ENCODE measurements at regions of chr1 and their contacts with region 1.

Region 1: DNA sequence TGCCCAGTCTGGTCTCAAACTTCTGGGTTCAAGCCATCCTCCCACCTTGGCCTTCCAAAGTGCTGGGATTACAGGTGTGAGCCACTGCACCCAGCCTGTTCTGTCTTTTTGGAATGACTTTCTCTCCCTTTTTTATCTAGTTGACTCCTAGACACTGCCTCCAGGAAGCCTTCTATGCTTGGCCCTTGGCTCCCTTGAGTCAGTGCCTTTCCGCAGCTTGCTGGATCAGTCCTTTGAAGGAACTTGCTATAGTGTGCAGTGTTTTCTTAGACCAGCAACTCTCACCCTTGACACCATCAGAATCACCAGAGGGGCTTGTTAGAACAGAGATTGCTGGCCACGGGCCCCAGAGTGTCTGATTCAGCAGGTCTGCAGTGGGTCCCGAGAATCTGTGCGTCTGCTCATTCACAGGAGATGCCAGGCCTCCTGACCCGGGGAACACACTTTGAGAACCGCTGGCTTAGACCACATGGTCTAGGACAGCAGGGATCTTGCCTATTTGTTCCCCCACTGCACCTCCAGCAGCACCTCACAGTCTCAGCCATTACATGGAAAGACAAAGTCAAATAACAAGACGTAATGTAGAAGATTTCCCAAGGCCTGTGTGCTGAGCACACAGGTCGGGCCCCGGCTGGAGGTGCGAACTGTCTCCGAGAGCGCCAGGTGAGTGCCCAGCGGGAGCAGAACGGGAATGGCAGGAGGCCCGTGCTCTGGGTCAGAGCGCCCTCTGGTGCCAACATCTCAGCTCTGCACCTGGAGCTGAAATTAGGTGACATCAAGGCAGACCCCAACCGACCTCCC is 27.4 kb upstream of the CTPS1 start:
- DNase-seq: peak; percentile 44 to 86 (median 85)
- ATAC-seq: peak; percentile 69 to 79
- H3K4me3 ChIP-seq: no peak overlapping the region
- H3K27ac ChIP-seq: no peak overlapping the region
- H3K4me1 ChIP-seq: peaks cover 4% of the 10 kb centered on the region
- H3K27me3 ChIP-seq: no peaks in the 10 kb centered on the region

Region 2: DNA sequence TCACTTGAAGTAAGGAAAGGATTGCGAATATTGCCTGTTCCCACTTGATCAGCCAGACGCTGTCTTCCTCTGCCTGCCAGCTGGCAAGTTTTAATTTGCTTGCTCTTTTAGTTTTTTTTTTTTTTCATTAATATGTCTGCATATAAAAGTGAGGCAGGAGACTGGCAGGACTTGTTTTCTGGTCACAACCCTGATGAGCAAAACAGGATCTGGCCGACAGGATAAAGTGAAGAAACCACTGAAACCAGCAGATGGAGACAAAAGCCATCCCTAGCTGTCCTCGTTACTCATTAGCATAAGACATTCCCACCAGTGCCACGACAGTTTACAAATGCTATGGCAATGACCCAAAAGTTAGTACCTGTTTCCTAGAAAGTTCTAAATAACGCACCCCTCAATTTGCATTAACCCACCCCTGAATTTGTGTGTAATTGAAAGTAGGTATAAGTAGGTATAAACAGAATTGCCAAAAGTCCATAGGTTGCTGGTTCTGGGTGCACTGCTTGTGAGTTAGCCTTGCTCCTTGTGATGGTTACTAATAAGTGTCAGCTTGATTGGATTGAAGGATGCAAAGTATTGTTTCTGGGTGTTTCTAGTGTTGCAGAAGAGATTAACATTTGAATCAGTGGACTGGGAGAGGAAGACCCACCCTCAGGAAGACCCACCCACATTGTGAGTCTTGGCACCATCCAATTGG is 359.9 kb before region 1 on chr1:
- intact Hi-C with region 1: loop called in 1 of 4 experiments (anchors 10 kb)
- DNase-seq: no peak
- ATAC-seq: peak; percentile 50 to 70
- H3K4me3 ChIP-seq: no peak overlapping the region
- H3K27ac ChIP-seq: no peak overlapping the region
- H3K4me1 ChIP-seq: no peaks in the 10 kb centered on the region
- H3K27me3 ChIP-seq: no peaks in the 10 kb centered on the region

Region 3: GRCh38 chr1:40606978-40607377 is 345.2 kb before region 1 on chr1:
- intact Hi-C with region 1: loop called in 1 of 4 experiments (anchors 10 kb)
- DNase-seq: no peak
- ATAC-seq: no peak
- H3K4me3 ChIP-seq: no peak overlapping the region
- H3K27ac ChIP-seq: no peak overlapping the region
- H3K4me1 ChIP-seq: no peaks in the 10 kb centered on the region
- H3K27me3 ChIP-seq: no peaks in the 10 kb centered on the region

Region 4: DNA sequence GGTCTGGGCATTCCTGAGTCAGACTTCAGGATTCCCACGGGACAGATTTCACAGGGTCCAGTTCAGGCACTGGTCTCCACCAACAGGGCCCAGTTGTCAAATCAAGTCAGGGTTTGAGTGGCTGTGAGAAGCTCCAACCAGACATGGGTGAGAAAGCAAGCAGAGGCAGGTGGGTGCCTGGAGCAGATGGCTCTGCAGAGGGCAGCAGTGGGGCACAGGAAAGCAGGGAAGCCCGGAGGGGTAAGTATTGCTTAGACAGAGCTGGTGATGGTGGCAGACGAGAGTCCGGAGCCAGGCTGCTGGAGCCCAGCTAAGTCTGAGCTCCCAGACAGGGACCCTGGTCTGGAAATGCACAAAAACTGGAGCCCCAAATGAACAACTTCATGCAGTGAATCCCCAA is 327.1 kb before region 1 on chr1:
- intact Hi-C with region 1: loop called in 1 of 4 experiments (anchors 10 kb)
- DNase-seq: peak; percentile 31 to 69 (median 61)
- ATAC-seq: peak; percentile 56 to 60
- H3K4me3 ChIP-seq: no peak overlapping the region
- H3K27ac ChIP-seq: no peak overlapping the region
- H3K4me1 ChIP-seq: no peaks in the 10 kb centered on the region
- H3K27me3 ChIP-seq: no peaks in the 10 kb centered on the region

Region 5: GRCh38 chr1:40736085-40736531 is 216.0 kb before region 1 on chr1:
- intact Hi-C with region 1: no loop called
- DNase-seq: no peak
- ATAC-seq: peak; percentile 46 to 53
- H3K4me3 ChIP-seq: no peak overlapping the region
- H3K27ac ChIP-seq: no peak overlapping the region
- H3K4me1 ChIP-seq: peaks cover 3% of the 10 kb centered on the region
- H3K27me3 ChIP-seq: no peaks in the 10 kb centered on the region

Region 6: DNA sequence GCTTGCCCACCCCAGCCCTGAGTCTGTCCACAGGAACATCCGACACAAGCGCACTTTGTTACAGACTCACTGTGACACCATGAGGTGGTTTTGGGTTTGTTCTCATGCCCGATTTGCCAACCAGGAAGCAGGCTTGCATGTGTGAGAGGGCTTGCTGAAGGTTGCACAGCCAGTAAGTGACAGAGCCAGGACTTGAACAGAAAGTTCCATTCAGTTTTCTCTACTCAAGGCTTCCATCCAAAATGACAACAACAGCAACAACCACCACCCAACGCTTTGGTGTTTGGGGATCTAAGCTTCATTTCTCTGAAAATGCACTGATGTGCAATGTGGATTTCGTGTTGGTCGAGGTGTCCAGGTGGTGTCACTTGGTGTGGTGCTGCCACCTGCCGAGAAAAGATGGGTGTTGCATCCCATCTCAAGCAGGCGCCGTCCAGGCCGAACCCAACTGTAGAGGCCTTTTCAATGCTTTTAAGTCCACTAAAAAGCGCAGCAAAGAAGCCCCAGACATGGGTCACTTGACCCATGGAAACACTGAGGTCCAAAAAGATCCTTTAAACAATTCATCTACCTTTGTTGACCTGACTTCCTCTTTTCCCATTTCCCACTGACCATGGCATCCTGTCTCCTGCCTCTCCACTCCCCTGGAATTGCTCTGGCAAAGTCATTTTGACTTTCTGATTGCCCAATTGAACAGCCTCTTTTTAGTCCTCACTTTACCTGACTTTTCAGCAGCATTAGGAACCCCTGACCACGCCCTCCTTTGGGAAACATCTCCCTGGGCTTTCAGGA is 102.1 kb before region 1 on chr1:
- intact Hi-C with region 1: loop called (anchors 2 to 5 kb)
- DNase-seq: peak; percentile 64 to 87 (median 85)
- ATAC-seq: peak; percentile 77 to 79
- H3K4me3 ChIP-seq: no peak overlapping the region
- H3K27ac ChIP-seq: no peak overlapping the region
- H3K4me1 ChIP-seq: no peaks in the 10 kb centered on the region
- H3K27me3 ChIP-seq: no peaks in the 10 kb centered on the region

Region 7: GRCh38 chr1:40870135-40870728 is 81.9 kb before region 1 on chr1:
- intact Hi-C with region 1: loop called in 1 of 4 experiments (anchors 5 kb)
- DNase-seq: no peak
- ATAC-seq: no peak
- H3K4me3 ChIP-seq: no peak overlapping the region
- H3K27ac ChIP-seq: no peak overlapping the region
- H3K4me1 ChIP-seq: no peaks in the 10 kb centered on the region
- H3K27me3 ChIP-seq: no peaks in the 10 kb centered on the region

Measured in right cardiac atrium (tissue), 5 donors.